ENCODE measurements at regions of chr4 and their contacts with region 1.

Region 1: DNA sequence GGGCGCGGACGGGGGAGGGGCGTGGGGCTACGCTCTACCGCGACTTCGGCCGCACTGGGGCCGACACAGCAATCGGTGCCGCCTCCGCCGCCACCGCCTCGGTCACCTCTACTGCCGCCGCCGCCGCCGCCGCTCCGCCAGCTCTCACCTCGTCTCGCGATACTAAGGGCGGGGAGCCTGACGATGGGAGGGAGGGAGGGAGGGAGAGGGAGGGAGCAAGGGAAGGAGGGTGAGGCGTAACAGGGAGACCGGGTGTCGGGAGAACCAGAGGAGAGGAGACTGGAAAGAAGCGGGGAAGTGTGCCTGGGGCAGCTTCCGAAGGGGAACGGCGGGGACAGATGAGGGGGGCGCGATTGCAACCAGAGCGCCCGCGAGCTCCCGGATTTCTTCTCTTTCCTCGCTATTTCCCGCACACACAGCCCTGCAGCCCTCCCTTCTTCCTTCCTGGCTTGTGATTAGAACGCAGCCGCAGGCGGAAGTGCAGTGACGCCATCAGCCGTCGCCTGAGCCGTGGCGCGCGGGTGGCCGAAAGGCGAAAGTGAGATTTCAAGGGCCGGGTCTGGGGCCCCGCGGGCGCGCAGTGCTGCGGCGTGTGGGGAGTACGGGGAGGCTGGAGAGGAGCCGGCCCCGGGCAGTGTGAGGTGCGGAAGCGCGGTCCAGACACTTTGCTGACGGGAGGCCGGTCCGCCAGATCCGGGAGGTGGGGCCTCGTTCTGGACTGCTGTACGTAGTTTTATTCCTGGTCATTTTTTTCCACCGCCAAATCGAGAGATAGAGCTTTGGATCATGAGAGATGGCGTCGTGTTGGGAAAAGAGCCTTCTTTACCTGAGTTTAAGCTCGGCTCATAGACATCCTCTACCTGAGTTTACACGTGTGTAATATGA is at the start of gene ANKRD17:
- DNase-seq: peak; percentile 94
- H3K4me3 ChIP-seq: peak within 1 kb of the TSS; percentile 99
- H3K27ac ChIP-seq: peak within 1 kb of the TSS; percentile 84
- H3K4me1 ChIP-seq: peaks cover 50% of the 10 kb centered on the region
- CTCF ChIP-seq: no peak
- total RNA-seq, gene ANKRD17: 39.4 and 53.0 TPM in 2 replicates

Region 2: DNA sequence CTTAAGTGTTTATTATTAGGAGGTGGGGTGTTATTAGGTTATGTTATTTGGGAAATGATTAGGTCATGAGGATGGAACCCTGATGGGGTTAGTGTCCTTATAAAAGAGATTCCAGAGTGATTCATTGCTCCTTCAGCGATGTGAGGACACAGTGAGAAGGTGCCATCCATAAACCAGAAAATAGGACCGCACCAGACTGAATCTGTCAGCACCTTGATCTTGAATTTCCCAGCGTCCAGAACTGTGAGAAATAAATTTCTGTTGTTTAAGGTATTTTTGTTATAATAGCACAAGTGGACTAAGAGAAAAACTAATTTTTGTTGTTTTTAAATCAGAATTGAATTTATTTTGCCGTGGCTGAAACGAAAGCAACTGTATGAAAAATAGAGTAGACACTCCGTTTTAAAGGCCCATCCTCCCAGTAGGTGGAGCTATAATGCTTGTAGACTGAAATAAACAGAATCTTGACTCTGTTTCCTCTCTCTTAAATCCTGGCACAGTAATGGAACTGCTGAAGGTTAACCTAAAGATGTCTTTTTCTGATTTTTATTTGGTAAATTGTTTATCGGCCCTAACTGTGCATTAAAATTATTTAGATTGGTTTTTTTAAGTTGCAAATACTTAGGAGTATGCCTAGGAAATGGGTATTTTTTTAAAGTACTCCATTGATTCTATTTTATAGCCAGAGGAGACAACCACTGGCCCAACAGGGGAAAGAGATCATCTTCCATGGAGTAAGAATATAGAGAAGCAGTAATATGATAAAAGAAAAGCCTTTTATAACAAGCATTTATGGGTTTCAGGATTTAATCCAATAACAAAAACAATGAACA is 556.7 kb before region 1 on chr4:
- CTCF ChIA-PET with region 1: no interaction called
- POLR2A ChIA-PET with region 1: no interaction called
- intact Hi-C with region 1: loop called (anchors 5 kb)
- DNase-seq: peak; percentile 65
- H3K4me3 ChIP-seq: peak overlapping the region; percentile 38
- H3K27ac ChIP-seq: no peak overlapping the region
- H3K4me1 ChIP-seq: no peaks in the 10 kb centered on the region
- CTCF ChIP-seq: peak; percentile 90

Region 3: DNA sequence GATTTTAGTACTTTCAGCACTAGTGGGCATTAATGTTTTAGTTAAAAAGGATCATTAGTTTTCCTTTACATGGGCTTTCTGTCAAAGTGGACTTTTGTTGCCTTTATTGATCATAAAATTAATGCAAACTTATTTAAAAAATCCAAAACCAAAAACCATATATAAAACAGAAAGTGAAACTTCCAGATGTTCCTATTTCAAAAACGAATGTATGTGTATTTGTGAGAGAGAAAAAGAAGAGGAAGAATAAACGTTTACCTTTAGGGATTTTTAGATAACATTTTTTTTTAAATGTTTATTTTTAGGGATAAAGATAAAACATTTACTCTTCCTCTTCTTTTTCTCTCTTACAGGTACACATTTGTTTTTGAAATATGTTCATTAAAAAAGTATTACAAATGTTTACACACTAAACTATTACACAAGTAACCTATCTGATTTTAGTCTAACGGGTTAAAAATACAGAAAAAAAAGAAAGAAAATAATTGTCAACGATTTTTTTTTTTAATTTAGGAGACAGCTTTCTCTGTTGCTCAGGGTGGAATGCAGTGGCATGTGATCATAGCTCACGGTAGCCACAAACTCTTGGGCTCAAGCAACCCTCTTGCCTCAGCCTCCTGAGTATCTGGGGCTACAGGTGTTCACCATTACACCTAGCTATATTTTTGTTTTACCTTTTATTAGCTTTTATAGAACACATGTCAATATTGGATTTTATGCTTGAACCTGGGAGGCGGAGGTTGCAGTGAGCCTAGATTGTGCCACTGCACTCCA is 172.6 kb before region 1 on chr4:
- CTCF ChIA-PET with region 1: no interaction called
- POLR2A ChIA-PET with region 1: interaction called, 11 read pairs
- intact Hi-C with region 1: no loop called
- DNase-seq: peak; percentile 10
- H3K4me3 ChIP-seq: no peak overlapping the region
- H3K27ac ChIP-seq: peak overlapping the region; percentile 48
- H3K4me1 ChIP-seq: peaks cover 22% of the 10 kb centered on the region
- CTCF ChIP-seq: no peak

Region 4: DNA sequence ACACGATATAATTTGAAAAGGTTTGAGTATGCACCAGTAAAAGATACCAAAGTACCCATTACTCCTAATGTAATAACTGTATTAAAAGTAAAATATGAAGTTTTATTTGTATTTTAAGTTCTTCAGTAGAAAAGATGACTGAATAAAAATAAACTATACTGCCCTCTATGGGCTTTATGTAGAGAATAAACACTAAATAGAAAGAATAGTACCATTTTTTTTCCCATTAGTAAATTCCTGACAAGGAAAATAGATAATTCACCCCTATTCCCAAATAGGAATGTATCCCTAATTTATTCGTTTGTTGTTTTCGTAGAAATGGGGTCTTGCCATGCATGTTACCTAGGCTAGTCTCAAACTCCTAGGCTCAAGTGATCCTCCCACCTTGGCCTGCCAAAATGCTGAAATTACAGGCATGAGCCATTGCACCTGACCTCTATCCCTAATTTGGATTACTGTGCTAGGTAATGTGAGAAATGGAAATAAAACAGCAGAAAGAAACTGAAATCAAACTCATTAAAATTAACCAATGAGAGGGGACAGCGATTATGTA is 115.9 kb before region 1 on chr4:
- CTCF ChIA-PET with region 1: no interaction called
- POLR2A ChIA-PET with region 1: interaction called, 4 read pairs
- intact Hi-C with region 1: loop called (anchors 5 kb)
- DNase-seq: no peak
- H3K4me3 ChIP-seq: no peak overlapping the region
- H3K27ac ChIP-seq: no peak overlapping the region
- H3K4me1 ChIP-seq: no peaks in the 10 kb centered on the region
- CTCF ChIP-seq: peak; percentile 76

Region 5: DNA sequence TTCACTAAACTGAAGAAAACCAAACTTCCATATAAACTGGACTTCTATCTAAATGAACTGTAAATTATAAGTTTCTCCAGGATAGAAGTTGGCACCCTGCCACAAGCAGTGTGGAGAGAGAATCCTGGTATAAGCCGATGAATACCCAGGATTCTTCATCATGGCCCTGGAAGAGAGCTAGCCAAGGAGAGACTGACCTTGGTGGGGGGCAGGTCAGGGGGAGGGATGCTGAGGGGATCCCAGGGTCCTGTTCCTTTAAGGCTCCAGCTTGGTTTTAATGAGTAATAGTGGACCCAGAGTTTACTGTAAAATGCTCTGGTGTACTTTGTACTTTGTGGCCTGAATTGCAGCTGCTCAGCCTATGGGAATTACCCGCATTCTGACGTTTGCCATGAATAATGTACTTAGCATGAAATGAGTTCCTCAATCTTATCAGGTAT is 344.4 kb after region 1 on chr4:
- CTCF ChIA-PET with region 1: no interaction called
- POLR2A ChIA-PET with region 1: interaction called, 5 read pairs
- intact Hi-C with region 1: loop called (anchors 2 kb)
- DNase-seq: no peak
- H3K4me3 ChIP-seq: no peak overlapping the region
- H3K27ac ChIP-seq: peak overlapping the region; percentile 100
- H3K4me1 ChIP-seq: peaks cover 92% of the 10 kb centered on the region
- CTCF ChIP-seq: no peak

Region 6: GRCh38 chr4:73698217-73698616 is 439.3 kb after region 1 on chr4:
- CTCF ChIA-PET with region 1: no interaction called
- POLR2A ChIA-PET with region 1: no interaction called
- intact Hi-C with region 1: no loop called
- DNase-seq: no peak
- H3K4me3 ChIP-seq: no peak overlapping the region
- H3K27ac ChIP-seq: no peak overlapping the region
- H3K4me1 ChIP-seq: no peaks in the 10 kb centered on the region
- CTCF ChIP-seq: no peak